Calu3 (cell line): ENCODE measurements at regions of chr2 and their contacts with region 1.

Region 1: DNA sequence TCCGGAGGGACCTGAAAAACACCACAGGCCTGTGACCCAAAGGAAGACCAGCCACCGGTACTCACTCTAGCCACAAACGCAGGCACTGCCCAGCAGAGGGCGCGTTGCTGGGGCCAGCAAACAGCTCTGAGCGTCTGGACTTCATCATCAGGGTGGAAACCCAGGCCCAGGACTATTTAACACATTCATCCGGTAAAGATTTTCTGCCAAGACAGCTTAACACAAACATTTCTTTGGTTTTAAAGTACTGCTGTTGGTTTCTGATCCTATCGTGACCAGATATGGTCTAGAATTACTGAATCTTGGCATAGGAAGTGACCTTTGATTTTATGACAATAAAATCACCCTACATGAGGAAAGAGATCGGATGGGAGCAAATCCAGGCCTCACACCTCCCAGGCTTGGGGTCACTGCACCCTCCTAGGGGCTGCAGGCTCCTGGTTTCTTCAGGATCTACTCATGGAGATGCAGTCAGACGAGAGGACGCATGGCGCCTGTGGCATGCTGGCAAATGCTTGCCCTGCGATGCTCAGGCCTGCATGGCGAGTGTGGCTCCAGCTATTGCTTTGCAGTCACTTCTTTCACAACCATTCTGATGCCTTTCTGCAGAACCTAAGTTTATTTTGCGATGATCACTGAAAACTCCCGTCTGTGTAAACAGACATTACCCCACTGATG is 130.4 kb downstream of the COL4A4 start:
- DNase-seq: peak; percentile 56
- H3K4me3 Mint-ChIP-seq: no peak overlapping the region
- H3K27ac Mint-ChIP-seq: no peak overlapping the region
- H3K4me1 Mint-ChIP-seq: no peaks in the 10 kb centered on the region
- H3K27me3 Mint-ChIP-seq: no peaks in the 10 kb centered on the region
- CTCF ChIP-seq: peak; percentile 65

Region 2: GRCh38 chr2:227043981-227044380 is 10.4 kb after region 1 on chr2:
- CTCF ChIA-PET with region 1: no interaction called
- intact Hi-C with region 1: no loop called
- DNase-seq: no peak
- H3K4me3 Mint-ChIP-seq: no peak overlapping the region
- H3K27ac Mint-ChIP-seq: no peak overlapping the region
- H3K4me1 Mint-ChIP-seq: no peaks in the 10 kb centered on the region
- H3K27me3 Mint-ChIP-seq: no peaks in the 10 kb centered on the region
- CTCF ChIP-seq: no peak

Region 3: DNA sequence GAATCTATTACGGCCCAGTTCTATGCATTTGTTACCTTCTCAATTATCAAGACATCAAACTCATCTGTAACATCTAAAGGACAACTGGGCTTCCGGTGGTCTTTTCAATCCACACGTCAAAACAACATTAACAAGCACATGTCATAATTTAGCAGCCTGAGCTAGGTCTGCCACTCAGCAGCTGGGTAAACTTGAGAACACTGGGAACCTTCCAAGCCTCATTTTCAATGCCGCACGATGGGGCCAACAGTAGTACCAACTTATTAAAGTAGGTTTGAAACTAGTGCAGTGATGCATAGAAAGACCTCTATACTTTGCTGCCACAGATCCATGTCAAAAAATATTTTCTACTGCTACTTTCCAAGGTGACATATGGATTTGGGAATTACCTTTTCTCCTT is 70.0 kb after region 1 on chr2:
- CTCF ChIA-PET with region 1: no interaction called
- intact Hi-C with region 1: no loop called
- DNase-seq: no peak
- H3K4me3 Mint-ChIP-seq: no peak overlapping the region
- H3K27ac Mint-ChIP-seq: no peak overlapping the region
- H3K4me1 Mint-ChIP-seq: no peaks in the 10 kb centered on the region
- H3K27me3 Mint-ChIP-seq: no peaks in the 10 kb centered on the region
- CTCF ChIP-seq: no peak

Region 4: DNA sequence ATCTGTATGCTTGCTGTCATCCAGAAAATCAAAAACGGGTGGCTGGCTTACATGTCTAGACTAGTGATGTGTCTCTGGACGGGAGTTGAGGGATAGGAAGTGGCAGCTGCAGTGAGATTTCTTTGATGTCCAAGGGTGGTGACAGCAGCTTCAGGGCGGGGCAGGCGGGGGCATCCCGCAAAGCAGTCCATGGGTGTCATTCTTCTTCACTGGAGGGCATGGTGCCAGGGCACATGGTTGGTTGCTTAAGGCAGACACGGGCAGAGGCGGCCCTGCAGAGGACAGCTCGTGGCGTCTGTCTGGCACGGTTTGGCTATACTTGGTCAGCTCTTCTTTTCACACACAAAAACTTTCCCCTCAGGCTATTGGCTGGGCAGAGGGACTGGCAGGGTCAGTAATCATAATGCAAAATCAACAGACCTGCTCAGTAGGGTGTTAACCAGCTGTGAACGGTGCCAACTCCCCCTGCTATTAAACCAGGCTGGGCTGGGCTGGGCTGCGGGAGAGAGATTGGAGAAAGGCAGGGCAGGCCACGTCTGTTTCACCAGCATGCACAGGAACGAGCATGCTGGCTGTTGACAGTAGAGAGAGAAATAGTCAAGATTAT is 194.6 kb after region 1 on chr2:
- CTCF ChIA-PET with region 1: no interaction called
- intact Hi-C with region 1: loop called (anchors 10 kb)
- DNase-seq: peak; percentile 34
- H3K4me3 Mint-ChIP-seq: peak overlapping the region; percentile 48
- H3K27ac Mint-ChIP-seq: no peak overlapping the region
- H3K4me1 Mint-ChIP-seq: peaks cover 17% of the 10 kb centered on the region
- H3K27me3 Mint-ChIP-seq: no peaks in the 10 kb centered on the region
- CTCF ChIP-seq: no peak